AG04449 (cell line): ENCODE measurements at regions of chr14 and their contacts with region 1.

Region 1: DNA sequence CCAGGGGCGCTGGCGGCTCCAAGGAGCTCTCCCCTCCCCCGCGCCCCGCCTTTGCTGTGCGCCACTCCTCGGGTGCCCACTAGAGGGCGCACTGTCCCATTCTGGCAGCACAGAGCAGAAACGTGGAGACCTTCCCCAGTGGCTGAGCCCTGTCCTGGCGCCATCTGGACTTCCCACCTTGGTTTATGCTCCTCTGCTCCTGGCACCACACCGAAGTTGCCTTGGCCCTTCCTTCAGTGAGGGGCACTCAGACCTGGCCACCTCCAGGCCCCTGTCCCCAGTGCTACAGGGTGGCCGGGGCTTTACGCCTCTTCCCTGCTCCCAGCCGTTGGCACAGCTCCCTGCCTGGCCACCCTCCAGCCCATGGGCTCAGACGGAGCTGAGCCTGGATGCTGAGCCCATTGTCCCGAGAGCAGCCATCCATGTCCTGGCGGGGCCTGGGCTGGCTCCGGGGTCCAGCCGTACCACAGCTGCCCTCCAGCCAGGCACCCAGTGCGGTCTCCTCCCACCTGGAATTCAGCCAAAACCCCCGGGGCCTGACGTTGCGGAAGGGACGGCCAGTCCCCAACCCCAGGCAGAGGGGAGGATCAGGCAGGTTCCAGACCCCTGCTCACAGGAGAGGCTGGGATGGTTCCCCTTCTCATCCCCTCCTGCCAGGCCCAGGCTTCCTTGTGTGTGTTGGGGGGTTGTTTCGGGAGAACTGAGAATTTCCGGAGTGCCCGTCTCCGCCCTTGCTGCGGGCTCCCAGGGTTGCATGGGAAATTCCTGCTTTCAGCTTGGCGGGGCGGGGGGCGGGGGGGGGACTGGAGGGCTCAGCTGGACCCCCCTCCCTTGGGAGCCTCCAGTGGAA is 5.5 kb upstream of the CRIP1 start:
- DNase-seq: peak; percentile 28
- H3K4me3 ChIP-seq: peak overlapping the region; percentile 65
- CTCF ChIP-seq: peak; percentile 99

Region 2: GRCh38 chr14:105368965-105369652 is 112.1 kb before region 1 on chr14:
- CTCF ChIA-PET with region 1: interaction called, 19 read pairs
- POLR2A ChIA-PET with region 1: no interaction called
- DNase-seq: no peak
- H3K4me3 ChIP-seq: no peak overlapping the region
- CTCF ChIP-seq: no peak

Region 3: DNA sequence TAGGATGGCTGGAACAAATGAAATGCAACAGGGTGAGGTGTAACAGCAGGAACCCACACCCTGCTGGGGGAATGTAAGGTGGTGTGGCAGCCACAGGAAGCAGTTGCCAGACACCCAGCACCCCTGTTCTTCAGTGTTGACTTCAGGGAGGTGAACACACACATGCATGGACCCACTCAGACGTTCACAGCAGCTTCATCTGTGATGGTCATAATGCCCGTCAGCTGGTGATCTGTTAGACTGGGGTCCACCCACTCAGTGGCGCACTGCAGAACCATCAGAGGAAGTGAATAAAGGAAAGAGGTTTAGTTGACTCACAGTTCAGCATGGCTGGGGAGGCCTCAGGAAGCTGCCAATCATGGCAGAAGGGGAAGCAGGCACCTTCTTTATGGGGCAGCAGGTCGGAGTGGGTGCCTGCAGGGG is 105.5 kb before region 1 on chr14:
- CTCF ChIA-PET with region 1: interaction called, 19 read pairs
- POLR2A ChIA-PET with region 1: no interaction called
- DNase-seq: no peak
- H3K4me3 ChIP-seq: no peak overlapping the region
- CTCF ChIP-seq: no peak

Region 4: DNA sequence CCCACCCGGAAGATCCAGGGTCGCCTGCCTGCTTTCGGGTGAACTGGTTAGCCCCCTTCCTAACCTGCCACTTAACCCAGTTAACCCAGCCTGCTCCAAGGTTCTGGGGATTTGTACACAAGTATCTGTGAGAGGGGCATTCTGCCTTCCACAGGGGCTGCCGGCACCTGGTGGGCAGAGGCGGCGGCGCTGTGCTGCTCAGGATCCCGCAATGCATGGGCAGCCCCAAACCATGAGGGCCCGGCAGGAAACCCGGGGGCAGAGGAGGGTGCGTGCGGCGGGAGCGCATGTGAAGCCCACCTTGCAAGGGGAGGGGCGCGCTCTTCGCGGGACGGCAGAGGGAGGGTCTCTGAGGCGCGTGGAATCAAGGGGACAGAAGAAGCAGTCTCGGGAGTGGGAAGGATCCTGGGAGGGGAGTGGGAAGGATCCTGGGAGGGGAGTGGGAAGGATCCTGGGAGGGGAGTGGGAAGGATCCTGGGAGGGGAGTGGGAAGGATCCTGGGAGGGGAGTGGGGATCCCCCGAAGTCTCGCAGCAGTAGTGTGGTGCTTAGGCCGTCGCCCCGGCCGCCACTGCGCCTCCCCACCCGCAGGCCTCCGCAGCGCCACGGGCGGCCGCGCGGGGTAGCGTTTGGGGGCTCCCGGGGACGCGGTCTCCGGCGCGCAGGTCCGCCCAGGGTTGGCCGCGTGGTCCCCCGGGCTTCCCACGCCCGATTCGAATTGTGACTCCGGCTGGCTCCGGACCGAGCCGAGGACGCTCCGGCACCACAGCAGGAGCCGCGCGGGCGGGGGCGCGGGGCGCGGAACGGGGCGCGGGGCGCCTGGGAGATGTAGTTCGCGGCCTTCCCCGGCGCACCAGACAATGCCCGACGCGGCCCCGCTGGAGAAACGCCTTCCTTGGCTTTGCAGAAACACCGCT is 66.5 kb before region 1 on chr14:
- CTCF ChIA-PET with region 1: interaction called, 12 read pairs
- POLR2A ChIA-PET with region 1: no interaction called
- DNase-seq: no peak
- H3K4me3 ChIP-seq: peak overlapping the region; percentile 52
- CTCF ChIP-seq: peak; percentile 66

Region 5: DNA sequence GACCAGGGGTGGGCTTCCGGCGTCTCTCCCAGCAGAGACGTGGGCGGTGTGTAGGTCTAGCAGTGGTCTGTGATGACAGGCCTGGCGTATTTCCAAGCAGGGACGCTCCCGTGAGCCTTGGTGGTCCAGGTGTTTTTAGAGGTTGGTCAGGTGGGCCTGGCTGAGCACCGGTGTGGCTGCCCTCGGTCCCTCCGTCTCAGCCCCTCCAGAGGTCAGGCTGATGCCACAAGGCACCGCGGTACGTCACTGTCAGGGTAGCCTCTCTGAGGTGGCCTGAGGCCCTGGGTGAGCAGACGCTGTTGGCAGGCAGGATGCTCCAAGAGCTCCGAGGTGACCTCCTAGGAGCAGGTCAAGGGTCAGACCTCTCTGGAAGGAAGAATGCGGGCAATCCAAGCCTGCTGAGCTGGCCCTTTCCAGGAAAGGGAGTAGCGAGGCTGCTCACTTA is 48.0 kb before region 1 on chr14:
- CTCF ChIA-PET with region 1: interaction called, 32 read pairs
- POLR2A ChIA-PET with region 1: no interaction called
- DNase-seq: no peak
- H3K4me3 ChIP-seq: no peak overlapping the region
- CTCF ChIP-seq: no peak

Region 6: DNA sequence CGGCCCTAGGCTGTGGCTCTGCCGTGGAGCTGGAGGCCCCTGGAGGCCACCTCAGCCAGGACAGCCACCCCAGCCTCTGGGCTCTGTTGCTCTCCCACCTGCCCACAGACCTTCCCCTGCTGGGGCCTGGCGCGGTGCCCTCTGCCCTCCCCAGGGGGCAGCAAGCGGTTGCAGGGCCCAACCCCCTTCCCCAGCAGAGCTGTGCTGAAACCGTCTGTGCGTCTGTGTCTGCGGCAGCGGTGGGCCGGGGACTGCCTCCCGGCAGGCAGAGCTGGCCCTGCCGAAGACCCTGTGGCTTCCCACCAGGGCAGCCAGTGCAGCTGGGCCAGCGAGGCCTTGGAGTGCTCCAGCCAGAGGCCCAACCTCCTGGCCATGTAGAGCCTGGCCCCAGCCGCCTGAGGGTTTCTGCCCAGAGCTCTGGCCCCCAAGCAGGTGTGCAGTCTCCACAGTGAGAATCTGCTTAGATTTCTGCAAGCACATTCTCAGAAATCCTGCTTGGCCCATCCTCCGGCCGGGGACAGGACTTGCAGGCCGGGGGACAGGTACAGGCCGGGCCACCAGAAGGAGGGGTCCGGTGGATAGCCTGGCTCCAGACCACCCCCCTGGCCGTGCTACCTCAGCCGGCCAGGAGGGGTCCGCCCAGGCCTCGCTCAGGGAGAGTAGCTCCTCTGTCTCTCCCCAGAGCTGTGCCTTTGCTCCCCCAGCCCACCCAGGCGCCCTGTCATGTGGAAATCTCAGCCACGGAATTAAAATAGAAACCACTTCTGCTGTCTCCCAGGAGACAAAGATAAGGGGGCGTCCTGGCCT is 10.2 kb before region 1 on chr14:
- CTCF ChIA-PET with region 1: interaction called, 40 read pairs
- POLR2A ChIA-PET with region 1: no interaction called
- DNase-seq: no peak
- H3K4me3 ChIP-seq: no peak overlapping the region
- CTCF ChIP-seq: peak; percentile 10

Region 7: DNA sequence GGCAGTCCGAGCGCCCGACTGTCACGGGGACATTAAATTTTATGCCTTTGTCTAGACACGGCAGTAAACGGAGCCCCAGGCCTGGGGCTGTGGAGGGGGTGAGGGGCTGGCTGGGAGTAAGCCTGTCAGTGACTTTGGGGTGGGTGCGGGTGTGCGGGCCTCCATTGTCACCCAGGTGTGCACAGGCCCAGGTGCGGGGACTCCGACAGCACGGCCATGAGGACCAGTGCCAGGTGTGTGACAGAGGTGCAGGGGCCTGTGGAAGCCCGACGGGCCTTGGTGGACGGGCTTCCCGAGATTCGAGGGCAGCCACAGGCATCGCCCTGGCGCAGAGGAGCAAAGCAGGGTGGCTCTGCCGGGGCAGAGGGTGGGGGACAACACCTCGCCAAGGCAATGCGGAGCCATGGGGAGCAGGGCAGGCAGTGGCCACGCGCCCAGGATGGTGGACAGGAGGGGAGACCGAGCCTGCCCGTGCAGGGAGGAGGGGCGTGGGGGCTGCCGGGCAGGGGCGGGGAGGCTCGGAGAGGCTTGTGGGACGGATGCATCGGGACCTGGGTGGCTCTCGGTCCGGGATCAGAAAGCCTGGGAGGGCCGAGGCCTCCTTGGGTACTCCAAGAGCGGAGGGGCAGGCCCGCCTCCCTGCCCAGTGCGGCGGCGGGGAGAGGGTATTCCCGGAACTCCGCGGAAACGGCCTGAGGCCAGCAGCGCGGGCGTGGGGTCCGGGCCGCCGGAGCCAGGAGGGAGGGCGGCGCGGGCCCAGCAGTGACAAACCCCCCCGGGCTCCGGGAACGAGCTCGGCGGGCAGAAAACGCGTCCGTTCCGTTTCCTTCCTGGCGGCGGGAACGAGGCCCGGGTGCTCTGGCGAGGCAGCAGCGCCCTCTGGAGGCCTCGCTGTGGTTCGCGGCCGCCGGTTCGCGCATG is 46.7 kb after region 1 on chr14:
- CTCF ChIA-PET with region 1: interaction called, 11 read pairs
- POLR2A ChIA-PET with region 1: interaction called, 3 read pairs
- DNase-seq: no peak
- H3K4me3 ChIP-seq: peak overlapping the region; percentile 63
- CTCF ChIP-seq: peak; percentile 95

Region 8: DNA sequence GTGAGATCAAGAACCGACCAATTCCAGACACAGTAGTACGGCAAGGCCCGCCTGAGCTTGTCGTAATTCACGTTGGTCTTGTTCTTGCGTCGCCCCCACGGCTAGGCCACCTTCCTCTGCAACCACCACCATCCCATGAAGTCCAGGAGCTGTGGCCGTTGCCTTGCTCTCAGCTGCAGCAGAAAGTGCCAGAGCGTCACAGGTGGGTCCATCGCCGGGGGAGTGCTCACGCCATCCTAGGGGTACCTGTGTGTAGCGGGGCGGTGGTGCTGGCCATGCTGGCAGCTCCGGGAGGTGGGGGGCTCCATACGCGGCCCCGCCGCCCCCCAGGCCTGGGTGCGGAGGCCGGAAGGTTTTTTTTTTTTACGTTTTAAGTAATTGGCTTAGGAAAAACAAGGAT is 68.3 kb after region 1 on chr14:
- CTCF ChIA-PET with region 1: no interaction called
- POLR2A ChIA-PET with region 1: no interaction called
- DNase-seq: no peak
- H3K4me3 ChIP-seq: no peak overlapping the region
- CTCF ChIP-seq: no peak